WTC11 (cell line): ENCODE measurements at regions of chrX and their contacts with region 1.

Region 1: DNA sequence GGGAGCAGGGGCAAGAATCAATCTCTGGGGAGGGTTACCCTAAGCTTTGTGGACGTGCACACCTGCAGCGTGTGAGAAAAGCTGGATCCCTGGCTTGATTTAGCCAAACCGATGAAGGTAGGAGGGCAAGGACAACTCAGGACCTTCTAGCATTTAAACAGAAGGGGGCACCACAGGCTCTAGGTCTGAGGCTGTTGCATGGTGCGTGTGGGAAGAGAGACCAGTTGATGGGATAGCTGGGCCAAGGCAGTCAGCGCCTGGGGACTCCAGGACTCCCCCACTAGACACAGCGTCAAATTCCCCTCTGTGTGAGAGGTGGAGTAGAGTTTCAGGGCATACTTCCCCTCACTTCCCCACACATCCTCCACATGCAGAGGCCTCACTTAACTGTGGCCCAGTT is 4.3 kb downstream of the GABRQ start:
- DNase-seq: peak; percentile 21
- ATAC-seq: peak; percentile 33
- H3K4me3 Mint-ChIP-seq: no peak overlapping the region
- H3K27ac Mint-ChIP-seq: no peak overlapping the region
- H3K4me1 Mint-ChIP-seq: peaks cover 41% of the 10 kb centered on the region
- H3K27me3 Mint-ChIP-seq: peaks cover 16% of the 10 kb centered on the region
- CTCF ChIP-seq: no peak

Region 2: GRCh38 chrX:151753313-151754041 is 888.5 kb before region 1 on chrX:
- CTCF ChIA-PET with region 1: interaction called, 22 read pairs
- POLR2A ChIA-PET with region 1: no interaction called
- DNase-seq: peak; percentile 60
- ATAC-seq: peak; percentile 82
- H3K4me3 Mint-ChIP-seq: no peak overlapping the region
- H3K27ac Mint-ChIP-seq: no peak overlapping the region
- H3K4me1 Mint-ChIP-seq: peaks cover 19% of the 10 kb centered on the region
- H3K27me3 Mint-ChIP-seq: peaks cover 6% of the 10 kb centered on the region
- CTCF ChIP-seq: peak; percentile 68

Region 3: DNA sequence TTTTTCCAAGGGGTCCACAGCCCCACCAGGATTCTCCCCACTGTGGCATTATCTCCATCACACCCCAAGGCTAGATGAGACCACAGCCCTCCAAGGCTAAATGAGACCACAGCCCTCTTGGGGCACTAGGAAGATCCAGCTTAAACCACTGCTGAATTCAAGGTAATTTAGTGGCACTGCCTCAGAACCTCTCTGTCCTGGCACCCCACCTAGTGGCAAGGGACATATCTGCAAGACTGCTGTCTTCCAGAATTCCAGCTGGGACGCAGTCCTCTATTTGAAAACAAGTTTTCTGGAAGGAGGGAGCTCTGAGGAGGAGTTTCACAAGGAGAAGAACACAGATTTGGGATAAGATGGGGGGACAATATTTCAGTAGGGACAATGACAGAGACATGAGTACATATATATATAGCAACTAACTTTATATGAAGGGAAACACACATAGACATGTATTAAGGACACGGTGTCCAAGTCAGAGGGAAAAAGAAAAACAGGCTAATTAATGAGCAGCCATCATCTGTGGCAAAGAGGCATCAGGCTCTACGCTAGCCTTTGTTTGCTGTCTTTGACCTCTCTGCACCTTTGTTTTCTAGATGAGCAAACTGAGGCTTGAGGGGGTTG is 179.3 kb after region 1 on chrX:
- CTCF ChIA-PET with region 1: interaction called, 65 read pairs
- POLR2A ChIA-PET with region 1: no interaction called
- DNase-seq: peak; percentile 65
- ATAC-seq: peak; percentile 85
- H3K4me3 Mint-ChIP-seq: no peak overlapping the region
- H3K27ac Mint-ChIP-seq: no peak overlapping the region
- H3K4me1 Mint-ChIP-seq: peaks cover 10% of the 10 kb centered on the region
- H3K27me3 Mint-ChIP-seq: peaks cover 3% of the 10 kb centered on the region
- CTCF ChIP-seq: peak; percentile 31; the same call in 1 of the 2 replicates